Endothelial cell of umbilical vein (primary cell): ENCODE measurements at regions of chr4 and their contacts with region 1.

Region 1: GRCh38 chr4:103008875-103009729 is 10.4 kb downstream of the SLC9B1 start:
- DNase-seq: peak; percentile 76
- H3K4me3 ChIP-seq: no peak overlapping the region
- H3K27ac ChIP-seq: no peak overlapping the region
- H3K4me1 ChIP-seq: no peaks in the 10 kb centered on the region
- H3K27me3 ChIP-seq: peaks cover 2% of the 10 kb centered on the region in 2 experiments
- CTCF ChIP-seq: peak; percentile 49 to 51
- POLR2A ChIP-seq: no peak

Region 2: DNA sequence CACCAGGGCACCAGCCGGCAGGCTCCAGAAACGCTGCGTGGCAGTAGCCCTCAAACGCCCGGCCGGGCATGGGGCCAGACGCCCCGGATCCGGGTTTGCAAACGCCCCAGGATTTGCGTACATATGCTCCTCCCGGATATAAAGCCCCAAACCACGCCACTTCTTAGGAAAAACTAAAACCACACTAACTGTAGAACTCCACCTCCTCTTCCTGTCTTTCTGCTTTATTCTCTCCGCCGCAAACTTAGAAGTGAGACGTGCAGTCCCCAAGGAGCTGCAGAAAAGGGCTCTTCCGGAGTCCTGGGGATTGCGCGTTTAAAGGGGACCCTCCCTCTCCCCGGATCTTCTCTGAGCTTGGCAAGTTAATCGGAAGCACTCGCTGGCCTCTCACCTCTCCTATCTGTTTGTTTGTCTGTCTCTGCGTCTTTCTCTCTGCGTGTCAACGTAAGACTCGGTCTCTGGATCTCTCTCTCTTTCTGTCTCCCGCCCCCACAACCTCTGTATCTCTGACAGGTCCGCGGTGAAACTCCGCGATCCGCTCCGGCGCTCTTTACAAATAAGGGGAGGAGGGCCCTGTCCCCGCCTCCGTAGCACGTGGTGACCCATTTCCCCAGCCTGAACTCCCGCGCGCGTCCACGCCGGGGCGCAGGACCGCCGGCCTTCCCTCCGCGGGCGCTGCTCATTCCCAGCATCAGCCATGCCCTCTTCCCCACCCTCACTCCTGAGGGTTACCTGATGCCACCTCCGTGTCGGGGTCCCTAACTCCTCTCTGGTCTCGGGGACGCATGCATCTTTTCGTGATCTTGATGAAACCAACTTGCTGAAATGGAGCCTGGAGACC is 663.9 kb before region 1 on chr4 and contains the start of gene SLC39A8:
- CTCF ChIA-PET with region 1: interaction called, 4 read pairs
- POLR2A ChIA-PET with region 1: no interaction called
- dilution Hi-C with region 1: no loop called
- intact Hi-C with region 1: loop called (anchors 1 kb)
- DNase-seq: peak; percentile 79
- H3K4me3 ChIP-seq: peak within 1 kb of the TSS; percentile 39 to 90 (median 89)
- H3K27ac ChIP-seq: no peak within 1 kb of the TSS
- H3K4me1 ChIP-seq: peaks cover 19% of the 10 kb centered on the region
- H3K27me3 ChIP-seq: peaks cover 2 to 5% of the 10 kb centered on the region in 2 experiments
- CTCF ChIP-seq: peak; percentile 67 to 84
- POLR2A ChIP-seq: peak; percentile 42
- total RNA-seq, gene SLC39A8: 6.0 and 6.7 TPM in 2 replicates

Region 3: DNA sequence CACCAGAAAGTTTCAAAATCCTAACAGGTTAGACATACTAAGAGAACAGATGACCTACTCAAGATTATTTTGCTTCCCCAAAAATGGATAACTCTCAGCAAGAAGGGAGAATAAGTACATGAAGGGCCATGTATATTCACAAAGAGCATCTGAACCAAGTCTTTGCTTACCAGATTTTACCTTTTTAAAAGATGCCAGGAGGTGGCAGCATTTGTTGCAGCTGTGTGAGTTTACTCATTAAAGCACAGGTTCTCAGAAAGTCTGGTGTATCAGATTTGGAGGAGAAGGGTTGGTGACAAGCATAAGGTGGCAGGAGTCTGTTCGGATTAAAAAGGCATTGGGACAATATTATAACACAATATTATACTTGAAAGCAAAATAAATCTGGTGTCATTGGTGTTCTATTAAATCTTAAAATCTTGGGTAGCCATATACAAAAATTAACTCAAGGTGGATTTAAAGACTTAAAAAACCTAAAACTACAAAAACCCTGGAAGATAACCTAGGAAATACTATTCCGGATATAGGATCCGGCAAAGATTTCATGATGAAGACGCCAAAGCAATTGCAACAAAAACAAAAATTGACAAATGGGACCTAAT is 559.2 kb before region 1 on chr4:
- CTCF ChIA-PET with region 1: interaction called, 26 read pairs
- POLR2A ChIA-PET with region 1: no interaction called
- dilution Hi-C with region 1: no loop called
- intact Hi-C with region 1: loop called (anchors 1 kb)
- DNase-seq: peak; percentile 74
- H3K4me3 ChIP-seq: no peak overlapping the region
- H3K27ac ChIP-seq: no peak overlapping the region
- H3K4me1 ChIP-seq: no peaks in the 10 kb centered on the region
- H3K27me3 ChIP-seq: no peaks in the 10 kb centered on the region
- CTCF ChIP-seq: peak; percentile 40 to 58
- POLR2A ChIP-seq: no peak